Calu3 (cell line): ENCODE measurements at regions of chr17 and their contacts with region 1.

Region 1: DNA sequence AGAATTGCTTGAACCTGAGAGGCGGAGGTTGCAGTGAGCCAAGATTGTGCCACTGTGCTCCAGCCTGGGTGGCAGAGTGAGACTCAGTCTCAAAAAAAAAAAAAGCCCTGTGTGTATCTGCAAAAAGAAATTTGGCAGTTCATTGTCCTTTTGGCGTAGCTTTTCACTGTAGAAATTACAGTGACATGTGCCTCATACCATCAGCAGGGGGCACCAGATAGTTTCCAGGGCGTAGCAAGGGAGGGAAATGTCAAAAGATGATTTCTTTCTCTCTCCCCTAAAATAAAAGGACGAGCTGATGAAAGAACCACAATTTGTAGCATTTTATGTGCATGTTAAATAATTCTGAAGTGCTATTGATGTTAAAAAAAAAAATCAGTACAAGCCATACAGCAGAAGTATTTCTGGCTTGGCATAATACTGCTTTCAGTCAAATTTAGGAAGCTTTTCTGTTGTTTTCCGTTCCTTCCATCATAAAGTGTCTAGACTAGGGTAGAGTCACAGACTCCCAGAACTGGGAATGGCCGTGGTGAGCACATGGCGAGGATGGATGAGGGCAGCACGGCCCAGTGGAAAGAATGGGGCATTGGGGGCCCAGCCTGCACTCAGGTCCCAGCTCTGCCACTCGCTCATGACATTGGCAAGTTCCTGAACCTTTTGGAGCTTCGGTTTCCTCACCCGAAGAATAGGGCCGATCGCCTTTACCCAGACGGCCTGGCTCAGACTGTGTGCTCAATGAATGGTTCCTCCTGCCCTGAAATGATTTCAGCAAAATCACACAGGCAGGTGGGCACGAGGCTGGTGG is 59.8 kb upstream of the RPH3AL start:
- DNase-seq: peak; percentile 36
- H3K4me3 Mint-ChIP-seq: no peak overlapping the region
- H3K27ac Mint-ChIP-seq: no peak overlapping the region
- H3K4me1 Mint-ChIP-seq: peaks cover 8% of the 10 kb centered on the region
- H3K27me3 Mint-ChIP-seq: no peaks in the 10 kb centered on the region
- CTCF ChIP-seq: peak; percentile 65

Region 2: GRCh38 chr17:352421-353212 is 59.8 kb before region 1 on chr17 and contains the start of gene RPH3AL:
- CTCF ChIA-PET with region 1: no interaction called
- intact Hi-C with region 1: no loop called
- DNase-seq: peak; percentile 79
- H3K4me3 Mint-ChIP-seq: peak within 1 kb of the TSS; percentile 78
- H3K27ac Mint-ChIP-seq: peak within 1 kb of the TSS; percentile 95
- H3K4me1 Mint-ChIP-seq: peaks cover 58% of the 10 kb centered on the region
- H3K27me3 Mint-ChIP-seq: no peaks in the 10 kb centered on the region
- CTCF ChIP-seq: no peak
- total RNA-seq, gene RPH3AL: 14.1 and 17.9 TPM in 2 replicates

Region 3: GRCh38 chr17:491086-492021 is 78.9 kb after region 1 on chr17:
- CTCF ChIA-PET with region 1: no interaction called
- intact Hi-C with region 1: no loop called
- DNase-seq: peak; percentile 12
- H3K4me3 Mint-ChIP-seq: no peak overlapping the region
- H3K27ac Mint-ChIP-seq: no peak overlapping the region
- H3K4me1 Mint-ChIP-seq: no peaks in the 10 kb centered on the region
- H3K27me3 Mint-ChIP-seq: peaks cover 13% of the 10 kb centered on the region
- CTCF ChIP-seq: no peak

Region 4: DNA sequence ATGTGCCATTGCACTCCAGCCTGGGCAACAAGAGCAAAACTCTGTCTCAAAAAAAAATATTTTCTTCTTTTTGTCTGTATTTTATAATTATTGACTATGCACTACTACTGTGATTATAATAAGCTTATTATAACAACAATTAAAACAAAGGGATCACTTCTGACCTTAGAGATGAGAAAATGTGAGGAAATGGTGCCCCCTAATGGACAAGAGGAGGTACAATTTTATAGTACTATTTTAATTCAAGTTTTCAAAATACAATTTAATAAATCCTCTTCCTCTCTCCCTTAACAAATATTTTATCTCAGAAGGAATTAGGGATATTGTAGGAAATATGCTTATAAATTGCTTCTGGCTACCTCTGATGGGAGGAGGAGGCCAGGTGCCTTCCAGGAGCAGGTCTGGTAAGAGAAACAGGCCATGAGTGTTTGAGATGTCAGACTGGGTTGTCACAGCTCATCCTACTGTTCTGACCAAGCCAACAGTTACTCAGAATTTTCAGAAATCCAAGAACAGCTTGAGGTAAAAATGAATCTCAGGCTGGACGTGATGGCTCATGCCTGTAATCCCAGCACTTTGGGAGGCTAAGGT is 288.2 kb after region 1 on chr17:
- CTCF ChIA-PET with region 1: interaction called, 10 read pairs
- intact Hi-C with region 1: loop called (anchors 2 kb)
- DNase-seq: no peak
- H3K4me3 Mint-ChIP-seq: no peak overlapping the region
- H3K27ac Mint-ChIP-seq: no peak overlapping the region
- H3K4me1 Mint-ChIP-seq: no peaks in the 10 kb centered on the region
- H3K27me3 Mint-ChIP-seq: no peaks in the 10 kb centered on the region
- CTCF ChIP-seq: peak; percentile 30